ENCODE measurements at regions of chr13 and their contacts with region 1.

Region 1: DNA sequence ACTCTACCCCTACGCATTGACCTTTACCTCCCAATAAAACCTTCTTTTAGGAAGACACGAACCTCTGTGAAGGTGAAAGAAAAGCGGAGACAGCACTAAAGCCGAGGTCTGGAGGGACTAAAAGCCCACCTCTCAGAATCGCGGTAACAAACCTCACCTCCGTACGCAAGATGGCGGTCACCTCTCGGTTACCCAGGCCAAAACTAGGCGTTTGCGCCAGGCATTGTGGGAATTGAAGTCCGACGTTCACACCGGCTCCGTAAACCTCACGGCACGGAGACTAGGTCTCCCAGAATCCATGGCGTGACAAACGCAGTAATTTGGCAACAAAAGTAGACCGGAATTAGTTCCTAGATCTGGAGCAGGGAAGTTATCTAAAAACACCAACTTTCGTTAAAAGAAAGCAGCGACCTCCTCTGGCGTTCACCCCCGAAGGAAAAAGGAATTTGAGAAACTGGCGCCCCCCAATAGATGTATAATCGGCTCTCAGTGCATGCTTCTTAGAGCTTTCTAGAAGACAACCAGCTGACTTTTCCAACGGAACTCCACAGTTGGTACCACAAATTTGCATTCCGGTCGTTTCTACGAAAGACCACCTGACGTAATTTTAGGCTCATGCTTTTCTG is at the start of gene N4BP2L2:
- DNase-seq: peak; percentile 96
- ATAC-seq: peak; percentile 96
- H3K4me3 ChIP-seq: peak within 1 kb of the TSS; percentile 72 to 98 (median 86)
- H3K4me3 Mint-ChIP-seq: peak within 1 kb of the TSS; percentile 98
- H3K27ac ChIP-seq: peak within 1 kb of the TSS; percentile 98
- H3K27ac Mint-ChIP-seq: peak within 1 kb of the TSS; percentile 99
- H3K4me1 ChIP-seq: peaks cover 20 to 38% of the 10 kb centered on the region in 2 donors
- H3K4me1 Mint-ChIP-seq: peaks cover 44% of the 10 kb centered on the region
- H3K27me3 ChIP-seq: no peaks in the 10 kb centered on the region
- H3K27me3 Mint-ChIP-seq: no peaks in the 10 kb centered on the region
- CTCF ChIP-seq: no peak
- total RNA-seq, gene N4BP2L2: 239 and 259 TPM in 2 replicates

Region 2: DNA sequence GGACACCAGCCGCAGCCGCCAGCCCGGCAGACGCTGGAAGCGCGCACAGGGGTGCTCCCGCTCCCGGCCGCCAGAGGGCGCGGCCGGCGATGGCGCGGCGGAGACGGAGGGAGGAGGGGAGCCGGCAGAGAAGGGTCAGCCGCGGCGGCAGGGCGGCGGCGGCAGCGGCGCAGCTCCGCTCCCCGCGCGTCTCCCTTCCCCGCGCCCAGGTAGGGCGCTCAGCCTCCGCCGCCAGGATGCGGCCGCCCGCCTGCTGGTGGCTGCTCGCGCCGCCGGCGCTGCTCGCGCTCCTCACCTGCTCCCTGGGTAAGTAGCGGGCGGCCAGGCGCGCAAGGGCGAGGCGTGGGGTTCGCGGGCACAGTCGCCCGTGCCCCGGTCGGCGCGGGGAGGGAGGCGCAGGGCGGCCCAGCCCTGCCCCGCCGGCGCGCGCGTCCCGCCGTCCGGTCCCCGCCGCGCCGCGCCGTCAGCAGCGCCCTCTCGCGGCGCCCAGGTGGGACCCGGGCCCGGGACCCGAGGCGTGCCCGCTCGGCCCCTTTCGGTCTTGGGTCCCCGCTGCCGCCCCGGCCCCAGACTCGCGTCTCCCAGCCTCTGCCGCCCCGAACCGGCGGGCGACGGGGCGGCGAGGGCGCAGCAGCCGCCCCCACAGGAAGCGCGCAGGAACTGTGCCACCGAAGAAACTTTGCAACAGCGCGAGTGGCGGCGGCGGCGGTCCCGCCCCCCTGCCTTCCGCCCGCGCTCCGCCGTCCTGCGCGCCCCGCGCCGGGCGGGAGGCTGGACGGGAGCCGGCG is 1338.7 kb before region 1 on chr13 and contains the start of gene B3GLCT:
- CTCF ChIA-PET with region 1: no interaction called
- POLR2A ChIA-PET with region 1: no interaction called
- intact Hi-C with region 1: loop called (anchors 2 kb)
- DNase-seq: peak; percentile 91
- ATAC-seq: peak; percentile 74
- H3K4me3 ChIP-seq: peak within 1 kb of the TSS; percentile 59 to 77 (median 71)
- H3K4me3 Mint-ChIP-seq: peak within 1 kb of the TSS; percentile 88
- H3K27ac ChIP-seq: peak within 1 kb of the TSS; percentile 80 to 89
- H3K27ac Mint-ChIP-seq: peak within 1 kb of the TSS; percentile 87
- H3K4me1 ChIP-seq: peaks cover 8 to 18% of the 10 kb centered on the region in 2 donors
- H3K4me1 Mint-ChIP-seq: peaks cover 18% of the 10 kb centered on the region
- H3K27me3 ChIP-seq: no peaks in the 10 kb centered on the region
- H3K27me3 Mint-ChIP-seq: no peaks in the 10 kb centered on the region
- CTCF ChIP-seq: peak; percentile 92
- total RNA-seq, gene B3GLCT: 6.2 and 6.8 TPM in 2 replicates

Region 3: DNA sequence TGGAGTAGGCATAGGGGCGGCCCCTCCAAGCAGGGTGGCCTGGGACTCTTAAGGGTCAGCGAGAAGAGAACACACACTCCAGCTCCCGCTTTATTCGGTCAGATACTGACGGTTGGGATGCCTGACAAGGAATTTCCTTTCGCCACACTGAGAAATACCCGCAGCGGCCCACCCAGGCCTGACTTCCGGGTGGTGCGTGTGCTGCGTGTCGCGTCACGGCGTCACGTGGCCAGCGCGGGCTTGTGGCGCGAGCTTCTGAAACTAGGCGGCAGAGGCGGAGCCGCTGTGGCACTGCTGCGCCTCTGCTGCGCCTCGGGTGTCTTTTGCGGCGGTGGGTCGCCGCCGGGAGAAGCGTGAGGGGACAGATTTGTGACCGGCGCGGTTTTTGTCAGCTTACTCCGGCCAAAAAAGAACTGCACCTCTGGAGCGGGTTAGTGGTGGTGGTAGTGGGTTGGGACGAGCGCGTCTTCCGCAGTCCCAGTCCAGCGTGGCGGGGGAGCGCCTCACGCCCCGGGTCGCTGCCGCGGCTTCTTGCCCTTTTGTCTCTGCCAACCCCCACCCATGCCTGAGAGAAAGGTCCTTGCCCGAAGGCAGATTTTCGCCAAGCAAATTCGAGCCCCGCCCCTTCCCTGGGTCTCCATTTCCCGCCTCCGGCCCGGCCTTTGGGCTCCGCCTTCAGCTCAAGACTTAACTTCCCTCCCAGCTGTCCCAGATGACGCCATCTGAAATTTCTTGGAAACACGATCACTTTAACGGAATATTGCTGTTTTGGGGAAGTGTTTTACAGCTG is 223.3 kb before region 1 on chr13 and contains the starts of genes BRCA2 and ZAR1L:
- CTCF ChIA-PET with region 1: no interaction called
- POLR2A ChIA-PET with region 1: interaction called, 7 read pairs
- intact Hi-C with region 1: loop called (anchors 1 kb)
- DNase-seq: peak; percentile 94
- ATAC-seq: peak; percentile 90
- H3K4me3 ChIP-seq: peak within 1 kb of the TSS; percentile 74 to 91 (median 82)
- H3K4me3 Mint-ChIP-seq: peak within 1 kb of the TSS; percentile 91
- H3K27ac ChIP-seq: peak within 1 kb of the TSS; percentile 99 to 100
- H3K27ac Mint-ChIP-seq: peak within 1 kb of the TSS; percentile 99
- H3K4me1 ChIP-seq: peaks cover 7 to 20% of the 10 kb centered on the region in 2 donors
- H3K4me1 Mint-ChIP-seq: peaks cover 15% of the 10 kb centered on the region
- H3K27me3 ChIP-seq: no peaks in the 10 kb centered on the region
- H3K27me3 Mint-ChIP-seq: no peaks in the 10 kb centered on the region
- CTCF ChIP-seq: no peak
- total RNA-seq, gene BRCA2: 6.0 and 7.5 TPM in 2 replicates
- total RNA-seq, gene ZAR1L: not detected in 2 replicates

Region 4: DNA sequence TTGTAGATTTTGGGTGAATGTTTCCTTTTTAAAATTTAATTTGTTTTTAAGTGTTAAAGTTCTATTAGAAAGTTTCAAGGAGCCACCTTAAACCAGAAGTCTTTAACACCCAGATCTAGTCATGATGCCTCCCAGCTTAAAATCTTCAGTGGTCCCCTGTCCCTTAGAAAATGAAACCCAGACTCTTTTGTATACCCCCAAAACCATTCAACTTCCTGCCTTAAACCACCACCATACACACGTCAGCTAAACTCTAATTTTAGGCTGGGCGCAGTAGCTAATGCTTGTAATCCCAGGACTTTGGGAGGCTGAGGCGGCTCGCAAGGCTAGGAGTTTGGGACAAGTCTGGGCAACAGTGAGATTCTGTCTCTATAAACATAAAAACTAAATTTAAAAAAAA is 148.7 kb before region 1 on chr13:
- CTCF ChIA-PET with region 1: no interaction called
- POLR2A ChIA-PET with region 1: no interaction called
- intact Hi-C with region 1: no loop called
- DNase-seq: no peak
- ATAC-seq: no peak
- H3K4me3 ChIP-seq: no peak overlapping the region
- H3K4me3 Mint-ChIP-seq: no peak overlapping the region
- H3K27ac ChIP-seq: no peak overlapping the region
- H3K27ac Mint-ChIP-seq: no peak overlapping the region
- H3K4me1 ChIP-seq: peaks cover 0 to 3% of the 10 kb centered on the region in 2 donors
- H3K4me1 Mint-ChIP-seq: peaks cover 5% of the 10 kb centered on the region
- H3K27me3 ChIP-seq: no peaks in the 10 kb centered on the region
- H3K27me3 Mint-ChIP-seq: no peaks in the 10 kb centered on the region
- CTCF ChIP-seq: no peak

Region 5: GRCh38 chr13:32586080-32586900 is 47.6 kb after region 1 on chr13 and contains the start of gene PDS5B:
- CTCF ChIA-PET with region 1: interaction called, 10 read pairs
- POLR2A ChIA-PET with region 1: interaction called, 6 read pairs
- intact Hi-C with region 1: loop called (anchors 1 kb)
- DNase-seq: peak; percentile 97
- ATAC-seq: peak; percentile 85
- H3K4me3 ChIP-seq: peak within 1 kb of the TSS; percentile 72 to 96 (median 81)
- H3K4me3 Mint-ChIP-seq: peak within 1 kb of the TSS; percentile 95
- H3K27ac ChIP-seq: peak within 1 kb of the TSS; percentile 69 to 83
- H3K27ac Mint-ChIP-seq: peak within 1 kb of the TSS; percentile 91
- H3K4me1 ChIP-seq: peaks cover 20 to 23% of the 10 kb centered on the region in 2 donors
- H3K4me1 Mint-ChIP-seq: peaks cover 39% of the 10 kb centered on the region
- H3K27me3 ChIP-seq: peaks cover 0 to 6% (median 0%) of the 10 kb centered on the region in 4 experiments
- H3K27me3 Mint-ChIP-seq: no peaks in the 10 kb centered on the region
- CTCF ChIP-seq: peak; percentile 81
- total RNA-seq, gene PDS5B: 62.9 and 66.2 TPM in 2 replicates

Region 6: GRCh38 chr13:32650705-32651311 is 112.1 kb after region 1 on chr13:
- CTCF ChIA-PET with region 1: interaction called, 5 read pairs
- POLR2A ChIA-PET with region 1: no interaction called
- intact Hi-C with region 1: loop called (anchors 5 kb)
- DNase-seq: peak; percentile 71
- ATAC-seq: peak; percentile 74
- H3K4me3 ChIP-seq: no peak overlapping the region
- H3K4me3 Mint-ChIP-seq: no peak overlapping the region
- H3K27ac ChIP-seq: no peak overlapping the region
- H3K27ac Mint-ChIP-seq: no peak overlapping the region
- H3K4me1 ChIP-seq: peaks cover 26 to 38% of the 10 kb centered on the region in 2 donors
- H3K4me1 Mint-ChIP-seq: peaks cover 53% of the 10 kb centered on the region
- H3K27me3 ChIP-seq: no peaks in the 10 kb centered on the region
- H3K27me3 Mint-ChIP-seq: no peaks in the 10 kb centered on the region
- CTCF ChIP-seq: peak; percentile 89